HepG2 (cell line): ENCODE measurements at regions of chr15 and their contacts with region 1.

Region 1: DNA sequence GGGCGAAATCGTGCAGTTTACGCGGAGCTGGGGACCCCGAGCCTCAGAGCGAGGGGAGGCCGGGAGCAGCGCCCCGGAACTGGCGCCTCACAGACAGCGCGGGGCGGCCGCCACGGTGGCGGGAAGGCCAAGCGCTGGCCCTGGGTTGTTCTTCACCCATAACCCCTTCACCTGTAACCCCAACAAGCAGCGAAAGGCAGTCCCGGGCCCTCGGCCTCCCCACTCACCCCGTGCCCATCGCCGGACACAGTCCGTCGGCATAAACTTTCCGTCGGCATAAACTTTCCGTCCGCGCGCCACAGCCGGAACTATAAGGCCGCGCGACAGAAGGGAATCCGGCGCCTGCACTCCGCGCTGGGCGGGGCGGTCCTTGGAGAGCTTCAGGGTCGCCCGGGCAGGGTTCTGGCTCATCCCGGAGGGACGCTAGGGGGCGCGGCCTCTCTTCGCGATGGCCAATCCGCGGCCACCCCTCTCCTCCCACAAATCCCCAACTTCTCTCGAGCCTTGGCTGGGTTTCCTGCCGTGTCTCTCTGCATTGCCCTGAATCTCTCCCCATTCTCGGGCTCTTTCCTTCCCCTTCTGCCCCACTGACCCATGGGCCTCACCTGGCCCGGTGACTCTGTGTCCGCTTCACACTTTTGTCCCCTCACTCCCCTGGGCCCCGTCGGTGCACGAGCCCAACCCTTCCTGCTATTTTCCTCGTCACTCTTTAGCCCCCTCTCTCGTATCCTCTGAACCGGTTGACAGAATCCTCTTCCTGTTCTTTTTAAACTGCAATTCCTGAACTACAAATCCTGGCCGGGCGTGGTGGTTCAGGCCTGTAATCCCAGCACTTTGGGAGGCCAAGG is at the start of gene INTS14:
- DNase-seq: peak; percentile 92
- ATAC-seq: peak; percentile 95
- H3K4me3 ChIP-seq: peak within 1 kb of the TSS; percentile 87 to 91 (median 89)
- H3K27ac ChIP-seq: peak within 1 kb of the TSS; percentile 99
- H3K4me1 ChIP-seq: peaks cover 43% of the 10 kb centered on the region
- H3K27me3 ChIP-seq: no peaks in the 10 kb centered on the region; a peak in 1 of 5 replicates
- CTCF ChIP-seq: peak; percentile 93
- EP300 ChIP-seq: peak in 1 of 2 experiments; percentile 68; a peak in 3 of 4 replicates
- POLR2A ChIP-seq: peak; percentile 87 to 91
- RAD21 ChIP-seq: peak; percentile 70
- total RNA-seq, gene INTS14: 52.0 and 57.8 TPM in 2 replicates

Region 2: GRCh38 chr15:65530314-65531122 is 80.6 kb before region 1 on chr15 and contains the start of gene HACD3:
- CTCF ChIA-PET with region 1: no interaction called
- POLR2A ChIA-PET with region 1: interaction called, 10 read pairs
- in situ Hi-C with region 1: no loop called
- intact Hi-C with region 1: no loop called
- DNase-seq: peak; percentile 73
- ATAC-seq: peak; percentile 88
- H3K4me3 ChIP-seq: peak within 1 kb of the TSS; percentile 79 to 84 (median 84)
- H3K27ac ChIP-seq: peak within 1 kb of the TSS; percentile 90
- H3K4me1 ChIP-seq: peaks cover 58% of the 10 kb centered on the region
- H3K27me3 ChIP-seq: no peaks in the 10 kb centered on the region
- CTCF ChIP-seq: peak; percentile 3; the same call in 1 of the 2 replicates
- EP300 ChIP-seq: no peak
- POLR2A ChIP-seq: peak; percentile 73 to 77
- RAD21 ChIP-seq: peak; percentile 18; the same call in 1 of the 2 replicates
- total RNA-seq, gene HACD3: 108 and 161 TPM in 2 replicates

Region 3: DNA sequence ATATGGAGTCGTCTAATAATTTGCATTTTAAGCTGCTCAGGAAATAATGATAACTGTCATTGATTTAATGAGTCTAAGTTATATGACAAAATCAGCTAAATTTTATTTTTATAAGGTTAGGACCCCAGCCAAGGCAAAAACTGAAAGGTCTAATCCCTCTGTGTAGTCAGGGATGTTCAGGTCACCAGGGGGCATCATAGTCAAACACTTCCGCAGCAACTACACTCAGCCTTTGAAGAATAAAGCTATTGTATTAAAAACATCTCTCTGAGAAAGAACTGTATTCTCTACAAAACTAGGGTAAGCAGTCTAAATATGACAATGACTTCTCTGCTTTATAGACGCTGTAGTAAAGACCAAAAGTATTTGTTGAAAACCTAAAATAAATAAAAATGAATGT is 15.1 kb before region 1 on chr15:
- CTCF ChIA-PET with region 1: no interaction called
- POLR2A ChIA-PET with region 1: interaction called, 16 read pairs
- in situ Hi-C with region 1: no loop called
- intact Hi-C with region 1: no loop called
- DNase-seq: peak; percentile 67
- ATAC-seq: peak; percentile 83
- H3K4me3 ChIP-seq: no peak overlapping the region
- H3K27ac ChIP-seq: no peak overlapping the region
- H3K4me1 ChIP-seq: peaks cover 7% of the 10 kb centered on the region
- H3K27me3 ChIP-seq: no peaks in the 10 kb centered on the region
- CTCF ChIP-seq: peak; percentile 70
- EP300 ChIP-seq: no peak
- POLR2A ChIP-seq: no peak
- RAD21 ChIP-seq: peak; percentile 12; the same call in 1 of the 2 replicates

Region 4: GRCh38 chr15:65869127-65869953 is 258.2 kb after region 1 on chr15 and contains the start of gene RAB11A:
- CTCF ChIA-PET with region 1: interaction called, 3 read pairs
- POLR2A ChIA-PET with region 1: interaction called, 27 read pairs
- in situ Hi-C with region 1: no loop called
- intact Hi-C with region 1: loop called (anchors 1 kb)
- DNase-seq: peak; percentile 93
- ATAC-seq: peak; percentile 95
- H3K4me3 ChIP-seq: peak within 1 kb of the TSS; percentile 68 to 97 (median 88)
- H3K27ac ChIP-seq: peak within 1 kb of the TSS; percentile 87
- H3K4me1 ChIP-seq: peaks cover 47% of the 10 kb centered on the region
- H3K27me3 ChIP-seq: no peaks in the 10 kb centered on the region; a peak in 1 of 5 replicates
- CTCF ChIP-seq: peak; percentile 74
- EP300 ChIP-seq: no peak; a peak in 1 of 4 replicates
- POLR2A ChIP-seq: peak; percentile 93 to 96
- RAD21 ChIP-seq: peak; percentile 29; the same call in 1 of the 2 replicates
- total RNA-seq, gene RAB11A: 161 and 241 TPM in 2 replicates